ENCODE measurements at regions of chr2 and their contacts with region 1.

Region 1: DNA sequence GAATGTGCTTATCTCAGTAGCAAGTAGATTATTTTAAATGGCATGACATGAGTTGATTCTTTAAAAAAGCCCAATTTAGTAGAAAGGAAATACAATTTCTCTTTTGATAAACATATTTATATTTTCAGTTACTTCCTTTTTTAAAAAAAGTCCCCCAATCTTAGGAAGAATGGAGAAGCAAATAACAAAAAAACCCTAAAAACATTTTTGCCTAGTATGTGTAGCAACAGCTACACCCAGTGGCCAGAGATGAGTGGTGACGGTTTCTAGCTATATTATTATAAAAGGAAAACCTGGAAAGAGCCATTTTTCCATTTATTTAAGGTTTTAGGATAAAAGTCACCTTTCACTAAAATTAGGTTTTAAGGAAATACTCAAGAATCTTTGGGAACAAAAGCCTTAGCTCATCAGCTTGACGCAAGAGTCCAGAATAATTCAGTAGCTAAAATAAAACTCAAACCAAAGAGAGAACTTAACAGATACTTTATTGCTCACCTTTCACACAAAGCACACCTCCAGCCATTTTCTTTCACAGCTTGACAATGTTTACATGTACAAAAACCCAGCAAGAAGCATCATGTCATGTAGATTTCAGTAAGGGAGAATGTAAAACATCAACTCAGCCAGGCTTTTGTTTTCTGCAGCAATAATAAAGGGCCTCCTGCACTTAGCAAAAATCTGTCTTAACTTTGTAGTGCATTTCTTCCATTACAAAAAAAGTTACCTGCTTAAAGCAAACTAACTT is 15.7 kb downstream of the FAM98A start:
- DNase-seq: peak; percentile 28
- H3K4me3 Mint-ChIP-seq: no peak overlapping the region
- H3K27ac Mint-ChIP-seq: no peak overlapping the region
- H3K4me1 Mint-ChIP-seq: peaks cover 17% of the 10 kb centered on the region
- H3K27me3 Mint-ChIP-seq: no peaks in the 10 kb centered on the region

Region 2: DNA sequence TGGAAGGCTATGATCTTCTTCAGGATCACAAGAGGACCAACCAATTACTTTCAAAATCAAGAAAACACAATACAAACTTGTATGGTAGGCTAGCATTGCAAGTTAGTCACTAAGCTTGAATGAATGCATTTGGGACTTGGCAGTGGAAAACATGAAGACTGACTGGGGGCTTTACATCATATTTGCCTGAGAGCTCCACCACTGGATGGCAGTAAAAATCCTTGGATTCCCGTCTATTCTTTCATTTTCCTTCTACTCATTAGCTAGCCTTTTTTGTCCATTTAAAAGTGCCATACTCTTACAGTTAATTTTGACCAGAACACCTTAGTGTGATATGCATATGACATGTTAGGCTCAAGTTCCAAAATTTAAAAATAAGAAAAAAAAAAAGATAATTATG is 170.4 kb before region 1 on chr2:
- CTCF ChIA-PET with region 1: interaction called, 14 read pairs
- DNase-seq: no peak
- H3K4me3 Mint-ChIP-seq: no peak overlapping the region
- H3K27ac Mint-ChIP-seq: no peak overlapping the region
- H3K4me1 Mint-ChIP-seq: no peaks in the 10 kb centered on the region
- H3K27me3 Mint-ChIP-seq: no peaks in the 10 kb centered on the region

Region 3: GRCh38 chr2:33441235-33441810 is 142.0 kb before region 1 on chr2:
- CTCF ChIA-PET with region 1: interaction called, 16 read pairs
- DNase-seq: peak; percentile 32
- H3K4me3 Mint-ChIP-seq: no peak overlapping the region
- H3K27ac Mint-ChIP-seq: no peak overlapping the region
- H3K4me1 Mint-ChIP-seq: no peaks in the 10 kb centered on the region
- H3K27me3 Mint-ChIP-seq: peaks cover 11% of the 10 kb centered on the region

Region 4: GRCh38 chr2:33475224-33476130 is 107.9 kb before region 1 on chr2:
- CTCF ChIA-PET with region 1: interaction called, 38 read pairs
- DNase-seq: peak; percentile 88
- H3K4me3 Mint-ChIP-seq: peak overlapping the region; percentile 84
- H3K27ac Mint-ChIP-seq: peak overlapping the region; percentile 99
- H3K4me1 Mint-ChIP-seq: peaks cover 39% of the 10 kb centered on the region
- H3K27me3 Mint-ChIP-seq: no peaks in the 10 kb centered on the region

Measured in activated naive CD4-positive, alpha-beta T cell treated with anti-CD3 and anti-CD28 coated beads, Interleukin-2, amount 10 ng/mL, durations not matched to agents 7 days and 5 days (primary cell).